ENCODE measurements at regions of chr19 and their contacts with region 1.

Region 1: GRCh38 chr19:12610540-12611360 is at the starts of genes ZNF490 and ZNF791:
- DNase-seq: peak; percentile 97

Region 2: DNA sequence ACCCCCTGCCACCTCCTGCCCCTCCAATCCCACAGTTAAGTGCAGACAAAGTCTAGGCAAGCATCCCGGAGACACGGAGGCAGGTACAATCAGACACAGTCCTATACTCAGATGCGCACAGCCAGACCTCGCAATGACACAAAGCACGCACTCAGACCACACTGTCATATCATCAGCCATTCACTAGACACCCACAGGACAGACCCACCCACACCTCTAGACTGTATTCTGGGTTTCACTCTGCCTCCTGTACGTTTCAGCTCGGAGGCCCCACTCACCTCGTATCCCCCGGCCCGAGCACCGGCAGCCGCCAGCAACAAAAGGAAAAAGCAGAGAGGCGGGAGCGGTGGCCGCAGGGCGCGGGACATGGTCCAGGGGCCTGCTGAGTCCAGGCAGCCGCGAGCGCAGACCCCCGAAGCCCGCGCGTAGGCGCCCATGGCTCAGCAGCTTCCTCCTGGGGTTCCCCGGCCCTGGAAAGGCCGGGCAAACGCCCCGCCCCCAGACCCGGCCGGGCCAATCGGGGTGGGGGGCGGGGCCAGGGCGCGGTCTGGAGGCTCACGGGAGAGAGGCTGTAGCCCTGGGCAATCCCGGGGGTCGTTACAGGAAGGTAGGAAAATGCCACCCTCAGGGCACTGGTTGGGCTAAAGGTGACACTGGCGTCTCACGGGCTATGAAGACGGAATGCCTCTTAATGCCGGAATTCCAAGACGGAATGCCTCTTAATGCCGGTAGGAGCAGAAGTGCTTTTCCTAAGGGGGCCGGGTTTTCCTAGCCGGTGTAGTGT is 55.7 kb after region 1 on chr19 and contains the starts of genes MAN2B1 and WDR83:
- CTCF ChIA-PET with region 1: no interaction called
- POLR2A ChIA-PET with region 1: interaction called, 12 read pairs
- DNase-seq: peak; percentile 88

Measured in HEK293T (cell line).